Kidney (tissue), 22 donors: ENCODE measurements at regions of chr1 and their contacts with region 1.

Region 1: DNA sequence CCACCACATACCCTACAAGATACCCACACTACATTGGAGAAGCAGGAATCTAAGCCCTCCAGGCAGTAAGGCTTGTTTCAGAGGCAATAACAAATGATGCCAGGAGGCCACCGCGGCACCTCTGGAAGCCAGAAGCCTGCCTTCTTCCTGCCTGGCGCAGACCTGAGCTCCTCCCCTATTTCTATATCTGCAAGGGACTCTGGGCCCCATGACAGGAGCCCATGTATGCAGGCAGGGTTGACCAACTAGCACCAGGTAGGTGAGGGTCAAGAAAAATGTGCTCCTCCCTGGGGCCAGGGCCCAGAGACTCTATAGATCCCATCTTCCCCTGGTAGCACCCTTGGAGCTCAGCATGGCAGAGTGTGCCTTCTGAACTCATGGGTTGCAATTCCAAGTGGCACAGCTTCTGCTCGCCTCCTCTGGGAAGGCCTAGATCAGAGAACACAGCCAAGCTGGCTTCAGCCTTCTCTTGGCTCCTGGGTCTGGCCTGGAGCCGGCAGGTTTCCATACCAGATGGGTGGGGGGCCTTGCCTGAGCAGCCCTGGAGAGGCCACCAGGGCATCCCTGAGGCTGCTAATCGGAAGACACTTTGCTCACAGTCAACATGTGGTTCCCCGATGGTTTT is 85.1 kb downstream of the STUM start:
- DNase-seq: no peak
- H3K4me3 ChIP-seq: no peak overlapping the region
- H3K27ac ChIP-seq: no peak overlapping the region
- H3K4me1 ChIP-seq: no peaks in the 10 kb centered on the region
- H3K27me3 ChIP-seq: no peaks in the 10 kb centered on the region
- CTCF ChIP-seq: no peak

Region 2: GRCh38 chr1:226827968-226828513 is 194.4 kb after region 1 on chr1:
- intact Hi-C with region 1: loop called (anchors 2 kb)
- DNase-seq: peak; percentile 94 to 98 (median 95)
- H3K4me3 ChIP-seq: no peak overlapping the region
- H3K27ac ChIP-seq: peak overlapping the region in 1 of 2 donors; percentile 29
- H3K4me1 ChIP-seq: no peaks in the 10 kb centered on the region
- H3K27me3 ChIP-seq: no peaks in the 10 kb centered on the region
- CTCF ChIP-seq: peak; percentile 94